GM12878 (cell line): ENCODE measurements at regions of chr6 and their contacts with region 1.

Region 1: GRCh38 chr6:113626475-113626874 is 230.7 kb upstream of the MARCKS start:
- DNase-seq: no peak
- ATAC-seq: peak; percentile 42
- H3K4me3 ChIP-seq: peak overlapping the region; percentile 25; the same call in 1 of the 2 replicates
- H3K27ac ChIP-seq: peak overlapping the region; percentile 100
- H3K4me1 ChIP-seq: peaks cover 68% of the 10 kb centered on the region
- H3K27me3 ChIP-seq: no peaks in the 10 kb centered on the region
- CTCF ChIP-seq: no peak; a peak in 1 of 6 replicates
- EP300 ChIP-seq: 0 out of 4 replicates have a peak, but pooled peaks of 1 of the 2 experiments have one; percentile 11
- POLR2A ChIP-seq: no peak
- RAD21 ChIP-seq: peak; percentile 39; the same call in 1 of the 2 replicates

Region 2: GRCh38 chr6:113562248-113562647 is 64.2 kb before region 1 on chr6:
- CTCF ChIA-PET with region 1: no interaction called
- POLR2A ChIA-PET with region 1: no interaction called
- RAD21 ChIA-PET with region 1: no interaction called
- SMC1A ChIA-PET with region 1: no interaction called
- in situ Hi-C with region 1: no loop called
- intact Hi-C with region 1: loop called (anchors 1 kb)
- DNase-seq: no peak
- ATAC-seq: peak; percentile 63
- H3K4me3 ChIP-seq: no peak overlapping the region
- H3K27ac ChIP-seq: no peak overlapping the region
- H3K4me1 ChIP-seq: peaks cover 7% of the 10 kb centered on the region
- H3K27me3 ChIP-seq: no peaks in the 10 kb centered on the region
- CTCF ChIP-seq: no peak
- EP300 ChIP-seq: no peak
- POLR2A ChIP-seq: no peak
- RAD21 ChIP-seq: no peak

Region 3: DNA sequence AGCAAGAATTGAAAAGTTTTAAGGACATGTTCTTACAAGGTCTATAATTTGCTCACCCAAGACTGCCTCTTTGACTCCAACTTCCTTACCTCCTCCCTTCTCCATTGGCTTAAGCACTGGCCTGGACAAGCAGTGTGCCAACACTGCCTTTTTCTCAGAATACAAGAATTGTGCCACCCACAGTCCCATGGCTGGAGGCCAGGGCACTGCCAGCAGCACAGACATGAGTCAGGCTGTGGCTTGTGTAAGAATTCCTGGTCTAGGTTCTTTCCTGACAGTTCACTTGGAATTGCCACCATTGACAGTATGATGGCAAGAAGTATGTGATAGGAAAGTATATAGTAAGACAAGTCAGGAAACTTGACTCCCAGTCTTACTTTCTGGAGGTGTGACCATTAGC is 27.9 kb after region 1 on chr6:
- CTCF ChIA-PET with region 1: interaction called, 146 read pairs
- POLR2A ChIA-PET with region 1: interaction called, 304 read pairs
- RAD21 ChIA-PET with region 1: interaction called, 395 read pairs
- SMC1A ChIA-PET with region 1: interaction called, 489 read pairs
- in situ Hi-C with region 1: no loop called
- intact Hi-C with region 1: no loop called
- DNase-seq: no peak
- ATAC-seq: no peak
- H3K4me3 ChIP-seq: no peak overlapping the region
- H3K27ac ChIP-seq: peak overlapping the region; percentile 58; the same call in 1 of the 2 replicates
- H3K4me1 ChIP-seq: peaks cover 45% of the 10 kb centered on the region
- H3K27me3 ChIP-seq: no peaks in the 10 kb centered on the region
- CTCF ChIP-seq: no peak
- EP300 ChIP-seq: no peak
- POLR2A ChIP-seq: no peak
- RAD21 ChIP-seq: no peak

Region 4: GRCh38 chr6:113805173-113805790 is 178.8 kb after region 1 on chr6:
- CTCF ChIA-PET with region 1: interaction called, 4 read pairs
- POLR2A ChIA-PET with region 1: interaction called, 6 read pairs
- RAD21 ChIA-PET with region 1: interaction called, 11 read pairs
- SMC1A ChIA-PET with region 1: interaction called, 8 read pairs
- in situ Hi-C with region 1: loop called (anchors 5 kb)
- intact Hi-C with region 1: loop called (anchors 5 kb)
- DNase-seq: peak; percentile 71
- ATAC-seq: peak; percentile 92
- H3K4me3 ChIP-seq: peak overlapping the region; percentile 56; the same call in 1 of the 2 replicates
- H3K27ac ChIP-seq: peak overlapping the region; percentile 71; the same call in 1 of the 2 replicates
- H3K4me1 ChIP-seq: peaks cover 29% of the 10 kb centered on the region
- H3K27me3 ChIP-seq: no peaks in the 10 kb centered on the region
- CTCF ChIP-seq: no peak
- EP300 ChIP-seq: peak; percentile 45 to 83; a peak in 3 of 4 replicates
- POLR2A ChIP-seq: no peak
- RAD21 ChIP-seq: no peak